Panc1 (cell line): ENCODE measurements at regions of chr6 and their contacts with region 1.

Region 1: DNA sequence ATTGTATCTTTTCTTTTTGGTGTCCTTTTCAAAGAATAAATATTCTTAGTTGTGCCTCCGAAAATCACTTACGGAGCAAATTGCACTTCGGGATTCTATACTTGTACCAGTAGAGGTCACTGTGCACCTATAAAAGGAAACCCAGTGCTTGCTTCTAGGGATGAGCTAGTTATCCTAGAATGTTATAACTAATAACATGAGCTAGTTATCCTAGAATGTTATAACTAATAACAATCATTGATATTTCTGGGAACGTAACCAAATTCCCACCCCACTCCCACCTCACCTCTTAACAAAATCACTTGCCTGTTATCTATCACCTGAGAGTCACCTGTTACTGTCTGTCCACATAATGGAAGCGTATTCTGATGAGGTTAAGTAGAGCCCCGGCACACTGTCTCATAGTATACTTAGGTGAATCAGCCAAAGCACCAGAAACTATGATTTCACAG is 126.9 kb upstream of the TIAM2 start:
- DNase-seq: peak; percentile 10
- ATAC-seq: 0 out of 2 replicates have a peak, but pooled peaks have one; percentile 66
- H3K4me3 ChIP-seq: no peak overlapping the region
- H3K27ac ChIP-seq: no peak overlapping the region
- H3K4me1 ChIP-seq: no peaks in the 10 kb centered on the region
- H3K27me3 ChIP-seq: no peaks in the 10 kb centered on the region
- CTCF ChIP-seq: peak; percentile 75; the same call in 1 of the 2 replicates

Region 2: DNA sequence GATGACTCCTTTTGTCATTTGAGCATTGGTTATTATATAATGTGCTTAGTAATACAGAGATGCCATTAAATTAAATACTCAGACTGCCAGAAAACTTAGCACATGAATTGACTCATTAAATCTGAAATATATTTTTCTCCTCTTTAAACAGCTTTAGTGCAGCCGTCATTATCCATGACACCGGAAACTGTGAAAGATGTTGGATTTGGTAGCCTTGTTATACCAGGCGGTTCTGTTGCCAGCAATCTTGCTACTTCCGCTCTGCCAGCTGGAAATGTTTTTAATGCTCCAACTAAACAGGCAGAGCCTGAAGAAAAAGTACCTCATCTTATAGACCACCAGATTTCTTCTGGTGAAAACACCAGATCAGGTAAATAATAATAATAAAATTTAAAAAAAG is 37.4 kb before region 1 on chr6:
- CTCF ChIA-PET with region 1: no interaction called
- POLR2A ChIA-PET with region 1: no interaction called
- in situ Hi-C with region 1: no loop called
- intact Hi-C with region 1: no loop called
- DNase-seq: no peak
- ATAC-seq: no peak
- H3K4me3 ChIP-seq: no peak overlapping the region
- H3K27ac ChIP-seq: no peak overlapping the region
- H3K4me1 ChIP-seq: no peaks in the 10 kb centered on the region
- H3K27me3 ChIP-seq: no peaks in the 10 kb centered on the region
- CTCF ChIP-seq: no peak

Region 3: GRCh38 chr6:155264693-155265320 is 396.6 kb after region 1 on chr6:
- CTCF ChIA-PET with region 1: no interaction called
- POLR2A ChIA-PET with region 1: no interaction called
- in situ Hi-C with region 1: no loop called
- intact Hi-C with region 1: loop called (anchors 10 kb)
- DNase-seq: no peak
- ATAC-seq: no peak
- H3K4me3 ChIP-seq: no peak overlapping the region
- H3K27ac ChIP-seq: no peak overlapping the region
- H3K4me1 ChIP-seq: no peaks in the 10 kb centered on the region; the same call in 1 of the 2 replicates
- H3K27me3 ChIP-seq: no peaks in the 10 kb centered on the region
- CTCF ChIP-seq: no peak